CD4-positive, alpha-beta memory T cell (primary cell): ENCODE measurements at regions of chr4 and their contacts with region 1.

Region 1: GRCh38 chr4:81471588-81472288 is at the start of gene RASGEF1B:
- DNase-seq: peak; percentile 95 to 97 (median 96)
- H3K4me3 ChIP-seq: peak within 1 kb of the TSS; percentile 83 to 94
- H3K4me3 Mint-ChIP-seq: peak within 1 kb of the TSS; percentile 90 to 97 (median 95)
- H3K27ac ChIP-seq: peak within 1 kb of the TSS; percentile 83
- H3K27ac Mint-ChIP-seq: peak within 1 kb of the TSS; percentile 91 to 99 (median 98)
- H3K4me1 ChIP-seq: peaks cover 22% of the 10 kb centered on the region
- H3K4me1 Mint-ChIP-seq: peaks cover 25 to 47% (median 37%) of the 10 kb centered on the region in 4 donors
- H3K27me3 ChIP-seq: no peaks in the 10 kb centered on the region
- H3K27me3 Mint-ChIP-seq: no peaks in the 10 kb centered on the region
- total RNA-seq, gene RASGEF1B: 9.0 to 9.4 TPM

Region 2: GRCh38 chr4:81084029-81084428 is 387.7 kb before region 1 on chr4:
- CTCF ChIA-PET with region 1: no interaction called
- POLR2A ChIA-PET with region 1: no interaction called
- intact Hi-C with region 1: no loop called
- DNase-seq: no peak
- H3K4me3 ChIP-seq: no peak overlapping the region
- H3K4me3 Mint-ChIP-seq: no peak overlapping the region
- H3K27ac ChIP-seq: no peak overlapping the region
- H3K27ac Mint-ChIP-seq: no peak overlapping the region
- H3K4me1 ChIP-seq: no peaks in the 10 kb centered on the region
- H3K4me1 Mint-ChIP-seq: no peaks in the 10 kb centered on the region
- H3K27me3 ChIP-seq: no peaks in the 10 kb centered on the region
- H3K27me3 Mint-ChIP-seq: peaks cover 2 to 4% of the 10 kb centered on the region in 2 donors

Region 3: GRCh38 chr4:81405894-81406401 is 65.8 kb before region 1 on chr4:
- CTCF ChIA-PET with region 1: interaction called, 6 read pairs
- POLR2A ChIA-PET with region 1: no interaction called
- intact Hi-C with region 1: loop called (anchors 1 kb)
- DNase-seq: peak; percentile 46 to 74 (median 70)
- H3K4me3 ChIP-seq: no peak overlapping the region
- H3K4me3 Mint-ChIP-seq: peak overlapping the region in 3 of 8 donors; percentile 0 to 52 (median 35)
- H3K27ac ChIP-seq: no peak overlapping the region
- H3K27ac Mint-ChIP-seq: no peak overlapping the region
- H3K4me1 ChIP-seq: peaks cover 6% of the 10 kb centered on the region
- H3K4me1 Mint-ChIP-seq: peaks cover 0 to 3% (median 1%) of the 10 kb centered on the region in 4 donors
- H3K27me3 ChIP-seq: no peaks in the 10 kb centered on the region
- H3K27me3 Mint-ChIP-seq: peaks cover 1 to 2% of the 10 kb centered on the region in 2 donors

Region 4: DNA sequence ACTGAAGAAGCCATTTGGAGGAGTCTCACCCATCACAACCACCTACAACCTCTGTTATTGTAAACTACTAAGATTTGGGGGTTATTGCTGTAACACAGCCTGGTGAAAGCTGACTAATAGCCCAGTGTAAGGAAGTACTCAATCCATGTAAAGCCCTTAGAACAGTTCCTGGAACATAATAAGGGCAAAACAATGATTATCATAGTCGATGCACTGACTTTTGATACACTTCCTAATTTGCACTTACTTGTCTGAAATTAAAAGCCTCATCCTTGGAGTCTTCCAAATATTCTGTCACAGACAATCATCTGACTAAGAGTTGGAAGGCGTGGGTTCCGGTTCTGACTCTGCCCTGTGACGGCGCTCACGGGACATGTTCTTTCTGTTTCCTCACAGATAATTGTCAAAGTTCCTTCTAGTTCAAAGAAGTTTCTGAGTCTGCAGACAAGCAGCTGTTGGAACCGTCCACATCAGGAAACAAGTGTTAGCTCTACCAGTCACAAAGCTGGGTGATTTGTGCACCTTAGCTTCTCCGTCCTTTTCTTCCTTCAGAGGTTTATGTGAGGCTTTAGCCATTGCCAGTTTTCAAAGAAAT is 33.4 kb after region 1 on chr4:
- CTCF ChIA-PET with region 1: interaction called, 21 read pairs
- POLR2A ChIA-PET with region 1: interaction called, 31 read pairs
- intact Hi-C with region 1: loop called (anchors 1 kb)
- DNase-seq: peak; percentile 52 to 73 (median 58)
- H3K4me3 ChIP-seq: no peak overlapping the region
- H3K4me3 Mint-ChIP-seq: peak overlapping the region in 7 of 8 donors; percentile 56 to 80 (median 69)
- H3K27ac ChIP-seq: peak overlapping the region; percentile 24
- H3K27ac Mint-ChIP-seq: peak overlapping the region; percentile 78 to 91 (median 89)
- H3K4me1 ChIP-seq: peaks cover 20% of the 10 kb centered on the region
- H3K4me1 Mint-ChIP-seq: peaks cover 15 to 28% (median 16%) of the 10 kb centered on the region in 4 donors
- H3K27me3 ChIP-seq: no peaks in the 10 kb centered on the region
- H3K27me3 Mint-ChIP-seq: no peaks in the 10 kb centered on the region

Region 5: GRCh38 chr4:81688085-81688484 is 216.3 kb after region 1 on chr4:
- CTCF ChIA-PET with region 1: interaction called, 29 read pairs
- POLR2A ChIA-PET with region 1: no interaction called
- intact Hi-C with region 1: loop called (anchors 1 kb)
- DNase-seq: no peak
- H3K4me3 ChIP-seq: no peak overlapping the region
- H3K4me3 Mint-ChIP-seq: no peak overlapping the region
- H3K27ac ChIP-seq: no peak overlapping the region
- H3K27ac Mint-ChIP-seq: no peak overlapping the region
- H3K4me1 ChIP-seq: no peaks in the 10 kb centered on the region
- H3K4me1 Mint-ChIP-seq: no peaks in the 10 kb centered on the region
- H3K27me3 ChIP-seq: no peaks in the 10 kb centered on the region
- H3K27me3 Mint-ChIP-seq: peaks cover 0 to 1% of the 10 kb centered on the region in 2 donors

Region 6: DNA sequence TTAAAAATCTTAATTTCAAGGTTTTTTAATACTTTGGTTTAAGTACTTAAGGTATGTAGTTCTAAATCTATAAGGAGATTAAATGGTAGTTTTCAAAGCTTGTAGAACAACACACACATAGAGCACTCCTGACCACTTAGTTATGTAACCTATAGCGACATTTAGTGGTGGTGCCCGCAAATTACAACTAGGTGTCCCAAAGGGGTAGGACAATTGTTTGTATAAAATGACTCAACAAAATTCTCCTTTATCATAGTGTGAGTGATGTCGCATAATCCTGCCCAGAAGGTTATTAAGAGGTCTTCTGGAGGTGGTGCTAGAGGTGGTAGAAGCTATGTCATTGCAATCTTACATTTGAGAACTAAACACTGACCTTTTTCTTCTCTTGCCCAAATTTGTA is 373.0 kb after region 1 on chr4:
- CTCF ChIA-PET with region 1: interaction called, 249 read pairs
- POLR2A ChIA-PET with region 1: interaction called, 13 read pairs
- intact Hi-C with region 1: loop called (anchors 1 kb)
- DNase-seq: peak; percentile 64 to 73 (median 71)
- H3K4me3 ChIP-seq: no peak overlapping the region
- H3K4me3 Mint-ChIP-seq: no peak overlapping the region
- H3K27ac ChIP-seq: no peak overlapping the region
- H3K27ac Mint-ChIP-seq: no peak overlapping the region
- H3K4me1 ChIP-seq: no peaks in the 10 kb centered on the region
- H3K4me1 Mint-ChIP-seq: no peaks in the 10 kb centered on the region
- H3K27me3 ChIP-seq: no peaks in the 10 kb centered on the region
- H3K27me3 Mint-ChIP-seq: no peaks in the 10 kb centered on the region

Region 7: DNA sequence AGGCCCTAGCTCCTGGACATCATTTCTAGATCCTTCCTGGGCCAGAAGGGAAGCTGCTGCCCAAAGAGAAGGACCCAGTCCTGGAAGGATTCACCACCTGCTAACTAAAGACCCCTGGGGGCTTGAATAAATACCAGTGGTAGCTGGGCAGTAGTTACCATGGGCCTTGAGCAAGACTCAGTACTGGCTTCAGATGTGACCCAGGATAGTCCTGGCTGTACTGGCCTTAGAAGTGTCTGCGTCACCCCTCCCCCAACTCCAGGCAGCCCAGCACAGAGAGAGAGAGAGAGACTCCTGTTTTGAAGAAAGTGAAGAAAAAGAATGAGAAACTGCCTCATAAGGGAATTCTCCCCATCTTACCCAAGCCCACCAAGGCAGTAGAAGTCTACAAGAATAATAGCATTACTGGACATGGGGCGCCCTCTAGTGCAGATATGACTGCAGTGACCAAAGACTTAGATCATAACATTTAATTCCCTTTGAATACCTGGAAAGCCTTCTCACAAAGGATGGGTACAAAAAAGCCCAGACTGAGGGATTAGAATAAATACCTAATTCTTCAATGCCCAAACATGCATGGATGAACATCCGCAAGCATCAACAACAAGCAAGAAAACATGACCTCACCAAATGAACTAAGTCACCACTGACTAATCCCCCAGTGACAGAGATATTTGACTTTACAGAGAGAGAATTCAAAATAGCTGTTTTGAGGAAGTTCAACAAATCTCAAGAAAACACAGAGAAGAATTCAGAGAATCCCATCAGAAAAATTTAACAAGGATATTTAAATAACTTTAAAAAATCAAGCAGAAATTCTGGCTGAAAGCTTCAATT is 730.3 kb after region 1 on chr4:
- CTCF ChIA-PET with region 1: interaction called, 14 read pairs
- POLR2A ChIA-PET with region 1: no interaction called
- intact Hi-C with region 1: loop called (anchors 1 kb)
- DNase-seq: peak; percentile 39 to 52 (median 49)
- H3K4me3 ChIP-seq: no peak overlapping the region
- H3K4me3 Mint-ChIP-seq: no peak overlapping the region
- H3K27ac ChIP-seq: no peak overlapping the region
- H3K27ac Mint-ChIP-seq: no peak overlapping the region
- H3K4me1 ChIP-seq: no peaks in the 10 kb centered on the region
- H3K4me1 Mint-ChIP-seq: peaks cover 0 to 10% (median 3%) of the 10 kb centered on the region in 4 donors
- H3K27me3 ChIP-seq: no peaks in the 10 kb centered on the region
- H3K27me3 Mint-ChIP-seq: peaks cover 5 to 6% of the 10 kb centered on the region in 2 donors

Region 8: GRCh38 chr4:82373816-82374625 is 902.3 kb after region 1 on chr4 and contains the start of gene HNRNPD:
- CTCF ChIA-PET with region 1: no interaction called
- POLR2A ChIA-PET with region 1: interaction called, 8 read pairs
- intact Hi-C with region 1: loop called (anchors 1 kb)
- DNase-seq: peak; percentile 91 to 96 (median 95)
- H3K4me3 ChIP-seq: peak within 1 kb of the TSS; percentile 95 to 96
- H3K4me3 Mint-ChIP-seq: peak within 1 kb of the TSS; percentile 96 to 100 (median 98)
- H3K27ac ChIP-seq: peak within 1 kb of the TSS; percentile 98
- H3K27ac Mint-ChIP-seq: peak within 1 kb of the TSS; percentile 98 to 100 (median 99)
- H3K4me1 ChIP-seq: peaks cover 53% of the 10 kb centered on the region
- H3K4me1 Mint-ChIP-seq: peaks cover 32 to 67% (median 48%) of the 10 kb centered on the region in 4 donors
- H3K27me3 ChIP-seq: no peaks in the 10 kb centered on the region
- H3K27me3 Mint-ChIP-seq: peaks cover 0 to 2% of the 10 kb centered on the region in 2 donors
- total RNA-seq, gene HNRNPD: 234 to 247 TPM